Left ventricle myocardium inferior (tissue), 1 donor: ENCODE measurements at regions of chr11 and their contacts with region 1.

Region 1: DNA sequence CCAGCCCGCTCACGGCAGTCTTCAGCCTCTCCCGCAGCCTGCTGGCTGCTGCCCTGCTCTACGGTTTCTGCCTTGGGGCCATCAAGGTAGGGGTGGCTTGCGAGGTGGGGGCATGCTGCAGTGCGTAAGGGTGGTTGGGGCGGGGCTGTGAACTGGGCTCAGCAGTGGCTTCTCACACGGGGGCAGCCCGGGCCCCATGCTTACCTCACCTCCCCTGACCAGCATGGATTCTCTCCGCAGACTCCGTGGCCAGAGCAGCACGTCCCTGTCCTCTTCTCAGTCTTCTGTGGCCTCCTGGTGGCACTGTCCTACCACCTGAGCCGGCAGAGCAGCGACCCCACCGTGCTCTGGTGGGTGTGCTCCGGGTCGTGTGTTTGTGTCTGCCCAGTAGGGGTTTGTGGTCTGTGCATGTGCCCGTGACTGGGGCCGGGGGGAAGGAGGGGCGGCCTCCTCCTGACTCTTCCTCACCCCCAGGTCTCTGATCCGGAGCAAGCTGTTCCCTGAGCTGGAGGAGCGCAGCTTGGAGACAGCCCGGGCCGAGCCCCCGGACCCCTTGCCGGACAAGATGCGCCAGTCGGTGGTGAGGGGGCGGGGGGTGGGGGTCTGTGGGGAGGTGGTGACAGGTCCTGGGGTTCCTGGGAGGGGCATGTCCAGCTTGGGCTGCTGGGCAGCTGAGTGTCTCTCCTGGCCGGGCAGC is 9.5 kb downstream of the PCNX3 start:
- DNase-seq: no peak
- H3K4me3 ChIP-seq: no peak overlapping the region
- H3K27ac ChIP-seq: no peak overlapping the region
- H3K4me1 ChIP-seq: peaks cover 17% of the 10 kb centered on the region
- H3K27me3 ChIP-seq: no peaks in the 10 kb centered on the region
- CTCF ChIP-seq: no peak

Region 2: GRCh38 chr11:65366340-65366773 is 258.7 kb before region 1 on chr11:
- intact Hi-C with region 1: no loop called
- DNase-seq: no peak
- H3K4me3 ChIP-seq: no peak overlapping the region
- H3K27ac ChIP-seq: peak overlapping the region; percentile 83
- H3K4me1 ChIP-seq: peaks cover 28% of the 10 kb centered on the region
- H3K27me3 ChIP-seq: no peaks in the 10 kb centered on the region
- CTCF ChIP-seq: peak; percentile 83

Region 3: DNA sequence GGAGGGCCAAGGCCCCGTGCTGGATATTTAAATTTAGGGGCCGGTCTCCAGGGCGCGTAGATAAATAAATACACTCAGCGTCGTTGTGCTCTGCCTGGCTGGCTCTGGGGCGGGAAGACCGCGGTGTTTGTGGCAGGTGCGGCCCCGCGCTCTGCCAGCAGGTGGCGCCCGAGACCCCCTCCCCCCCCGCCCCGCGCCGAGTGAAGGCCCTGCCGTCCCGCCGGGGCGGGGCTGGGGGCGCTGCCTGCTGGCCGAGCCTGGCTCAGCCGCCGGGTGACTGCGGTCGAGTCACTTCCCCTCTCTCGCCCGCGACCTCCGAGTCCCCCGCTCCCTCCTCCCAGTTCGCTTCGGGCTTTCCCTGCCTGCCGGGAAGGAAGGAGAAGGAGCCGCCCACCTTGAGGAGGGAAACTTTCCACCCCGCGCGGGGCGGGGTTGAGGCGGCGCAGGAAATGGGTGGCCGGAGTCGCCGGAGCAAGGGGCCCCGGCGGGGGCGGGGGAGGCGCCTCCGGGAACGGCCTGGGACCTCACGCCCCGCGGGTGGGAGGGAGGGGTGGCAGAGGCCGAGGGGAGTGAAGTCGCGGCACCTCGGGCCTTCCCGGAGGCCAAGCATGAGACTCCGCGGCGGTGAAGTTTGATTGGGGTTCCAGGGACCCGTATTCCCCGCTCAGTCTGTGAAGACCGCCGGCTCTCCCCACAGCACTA is 50.8 kb before region 1 on chr11:
- intact Hi-C with region 1: no loop called
- DNase-seq: peak; percentile 94
- H3K4me3 ChIP-seq: peak overlapping the region; percentile 86
- H3K27ac ChIP-seq: peak overlapping the region; percentile 97
- H3K4me1 ChIP-seq: peaks cover 88% of the 10 kb centered on the region
- H3K27me3 ChIP-seq: no peaks in the 10 kb centered on the region
- CTCF ChIP-seq: peak; percentile 99

Region 4: DNA sequence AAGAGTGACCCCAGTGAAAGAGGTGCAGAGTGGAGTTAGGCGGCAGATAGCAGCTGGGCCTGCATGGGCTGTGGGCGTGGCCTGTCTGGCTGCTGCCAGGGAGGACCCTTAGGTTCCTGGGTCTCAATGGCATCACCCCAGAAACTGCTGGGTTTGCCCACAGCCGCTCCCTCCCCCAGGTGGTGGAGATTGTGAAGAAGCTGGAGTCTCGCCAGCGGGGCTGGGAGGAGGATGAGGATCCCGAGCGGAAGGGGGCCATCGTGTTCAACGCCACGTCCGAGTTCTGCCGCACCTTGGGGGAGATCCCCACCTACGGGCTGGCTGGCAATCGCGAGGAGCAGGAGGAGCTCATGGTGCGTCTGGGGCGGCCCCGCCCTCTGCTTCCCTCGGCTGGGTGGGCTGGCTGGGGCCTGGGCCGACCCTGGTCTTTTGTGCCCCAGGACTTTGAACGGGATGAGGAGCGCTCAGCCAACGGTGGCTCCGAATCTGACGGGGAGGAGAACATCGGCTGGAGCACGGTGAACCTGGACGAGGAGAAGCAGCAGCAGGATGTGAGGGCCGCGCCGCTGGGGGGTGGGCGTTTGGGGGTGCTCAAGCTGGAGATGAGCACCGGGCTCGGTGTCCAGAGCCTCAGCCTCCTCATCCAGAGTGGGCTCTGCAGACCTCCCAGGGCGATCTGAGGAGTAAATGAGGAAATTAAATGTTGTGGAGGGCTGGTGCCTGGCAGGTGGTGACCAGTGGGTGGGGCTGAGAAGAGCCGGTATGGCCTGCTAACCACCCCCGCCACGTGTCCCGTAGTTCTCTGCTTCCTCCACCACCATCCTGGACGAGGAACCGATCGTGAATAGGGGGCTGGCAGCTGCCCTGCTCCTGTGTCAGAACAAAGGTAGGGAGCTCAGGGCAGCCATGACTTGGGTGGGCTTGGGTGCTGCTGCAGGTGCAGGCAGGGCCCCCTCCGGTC is 351.4 kb after region 1 on chr11:
- intact Hi-C with region 1: loop called (anchors 5 kb)
- DNase-seq: no peak
- H3K4me3 ChIP-seq: no peak overlapping the region
- H3K27ac ChIP-seq: no peak overlapping the region
- H3K4me1 ChIP-seq: no peaks in the 10 kb centered on the region
- H3K27me3 ChIP-seq: no peaks in the 10 kb centered on the region
- CTCF ChIP-seq: no peak